ENCODE measurements at regions of chr17 and their contacts with region 1.

Region 1: GRCh38 chr17:49763735-49764558 is at the start of gene FAM117A:
- DNase-seq: peak; percentile 97
- H3K4me3 Mint-ChIP-seq: peak within 1 kb of the TSS; percentile 92
- H3K27ac Mint-ChIP-seq: peak within 1 kb of the TSS; percentile 87
- H3K4me1 Mint-ChIP-seq: peaks cover 43% of the 10 kb centered on the region
- H3K27me3 Mint-ChIP-seq: peaks cover 26% of the 10 kb centered on the region
- total RNA-seq, gene FAM117A: 12.2 and 15.8 TPM in 2 replicates

Region 2: GRCh38 chr17:49748791-49749190 is 15.2 kb before region 1 on chr17:
- intact Hi-C with region 1: loop called (anchors 2 kb)
- DNase-seq: peak; percentile 45
- H3K4me3 Mint-ChIP-seq: peak overlapping the region; percentile 41
- H3K27ac Mint-ChIP-seq: peak overlapping the region; percentile 69
- H3K4me1 Mint-ChIP-seq: peaks cover 58% of the 10 kb centered on the region
- H3K27me3 Mint-ChIP-seq: no peaks in the 10 kb centered on the region